ENCODE measurements at regions of chr11 and their contacts with region 1.

Region 1: GRCh38 chr11:86068951-86069407 is at the start of gene PICALM:
- DNase-seq: peak; percentile 97
- H3K4me3 ChIP-seq: peak within 1 kb of the TSS; percentile 91 to 98
- H3K27ac ChIP-seq: peak within 1 kb of the TSS; percentile 94 to 95
- H3K4me1 ChIP-seq: no peaks in the 10 kb centered on the region
- H3K27me3 ChIP-seq: no peaks in the 10 kb centered on the region
- CTCF ChIP-seq: peak in 3 of 4 experiments; percentile 6 to 33 (median 11)
- POLR2A ChIP-seq: peak; percentile 83
- total RNA-seq, gene PICALM: 144 to 206 TPM

Region 2: GRCh38 chr11:85941380-85941973 is 127.5 kb before region 1 on chr11:
- intact Hi-C with region 1: loop called (anchors 10 kb)
- DNase-seq: peak; percentile 37
- H3K4me3 ChIP-seq: no peak overlapping the region
- H3K27ac ChIP-seq: no peak overlapping the region
- H3K4me1 ChIP-seq: no peaks in the 10 kb centered on the region
- H3K27me3 ChIP-seq: no peaks in the 10 kb centered on the region
- CTCF ChIP-seq: peak in 3 of 4 experiments; percentile 55 to 70 (median 61)
- POLR2A ChIP-seq: no peak

Region 3: DNA sequence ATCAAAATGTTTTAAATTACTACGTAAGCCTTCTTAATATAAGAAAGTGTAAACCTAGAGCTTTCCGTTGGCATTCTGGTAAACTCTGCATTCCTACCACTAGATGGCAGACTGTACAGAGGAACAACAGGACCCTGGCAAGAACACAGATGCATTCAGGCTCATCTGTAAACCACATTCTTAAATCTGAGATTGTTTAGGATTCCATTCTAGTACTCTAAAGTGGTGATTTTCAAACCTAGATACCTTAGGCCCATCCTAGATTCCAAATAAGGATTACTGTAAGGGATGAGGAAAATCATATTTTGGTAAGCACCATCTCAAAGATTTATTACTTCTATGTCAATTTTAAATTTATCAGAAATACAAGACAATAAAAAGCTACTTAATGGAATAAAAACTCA is 27.0 kb before region 1 on chr11:
- intact Hi-C with region 1: loop called (anchors 2 kb)
- DNase-seq: peak; percentile 84
- H3K4me3 ChIP-seq: no peak overlapping the region
- H3K27ac ChIP-seq: peak overlapping the region in 1 of 2 donors; percentile 26
- H3K4me1 ChIP-seq: no peaks in the 10 kb centered on the region
- H3K27me3 ChIP-seq: no peaks in the 10 kb centered on the region
- CTCF ChIP-seq: peak; percentile 86 to 94 (median 88)
- POLR2A ChIP-seq: no peak

Region 4: DNA sequence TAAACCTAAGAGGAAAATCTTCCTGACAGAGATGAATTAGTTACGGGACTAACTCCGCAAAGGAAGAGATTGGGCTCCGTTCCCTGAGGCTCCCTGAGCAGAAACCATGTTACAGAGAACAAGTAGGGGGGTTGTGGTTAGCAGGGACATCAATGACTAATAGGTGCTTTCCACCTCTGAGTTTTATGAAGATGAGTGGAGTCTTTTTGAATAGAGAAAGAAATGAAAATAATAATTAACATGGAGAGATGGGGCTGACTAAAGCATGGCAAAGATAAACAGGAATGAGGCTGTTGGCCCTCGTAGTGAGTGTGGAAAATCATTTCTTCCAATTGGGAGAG is 47.4 kb after region 1 on chr11:
- intact Hi-C with region 1: loop called (anchors 5 kb)
- DNase-seq: no peak
- H3K4me3 ChIP-seq: no peak overlapping the region
- H3K27ac ChIP-seq: no peak overlapping the region
- H3K4me1 ChIP-seq: no peaks in the 10 kb centered on the region
- H3K27me3 ChIP-seq: no peaks in the 10 kb centered on the region
- CTCF ChIP-seq: no peak
- POLR2A ChIP-seq: no peak

Measured in prostate gland (tissue), 2 donors.